ENCODE measurements at regions of chrX and their contacts with region 1.

Region 1: DNA sequence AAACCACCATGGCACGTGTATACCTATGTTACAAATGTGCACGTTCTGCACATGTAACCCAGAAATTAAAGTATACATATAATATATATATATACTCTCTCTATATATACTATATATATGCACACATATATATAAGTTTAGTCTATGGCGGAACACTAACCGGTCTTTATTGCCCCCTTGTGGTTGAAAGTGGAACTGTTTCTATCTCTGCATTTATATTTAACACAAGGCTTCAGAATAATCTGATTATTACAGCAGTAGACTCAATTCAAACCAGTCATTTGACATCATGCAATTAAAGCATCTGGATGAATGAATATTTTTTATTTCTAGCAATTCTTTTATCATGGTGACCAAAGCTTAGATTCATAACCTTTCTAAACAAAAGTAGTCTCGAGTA is 14.6 kb downstream of the RAB9B start:
- DNase-seq: peak; percentile 71
- H3K4me3 ChIP-seq: no peak overlapping the region
- H3K27ac ChIP-seq: no peak overlapping the region
- H3K4me1 ChIP-seq: peaks cover 8% of the 10 kb centered on the region
- CTCF ChIP-seq: peak; percentile 76

Region 2: DNA sequence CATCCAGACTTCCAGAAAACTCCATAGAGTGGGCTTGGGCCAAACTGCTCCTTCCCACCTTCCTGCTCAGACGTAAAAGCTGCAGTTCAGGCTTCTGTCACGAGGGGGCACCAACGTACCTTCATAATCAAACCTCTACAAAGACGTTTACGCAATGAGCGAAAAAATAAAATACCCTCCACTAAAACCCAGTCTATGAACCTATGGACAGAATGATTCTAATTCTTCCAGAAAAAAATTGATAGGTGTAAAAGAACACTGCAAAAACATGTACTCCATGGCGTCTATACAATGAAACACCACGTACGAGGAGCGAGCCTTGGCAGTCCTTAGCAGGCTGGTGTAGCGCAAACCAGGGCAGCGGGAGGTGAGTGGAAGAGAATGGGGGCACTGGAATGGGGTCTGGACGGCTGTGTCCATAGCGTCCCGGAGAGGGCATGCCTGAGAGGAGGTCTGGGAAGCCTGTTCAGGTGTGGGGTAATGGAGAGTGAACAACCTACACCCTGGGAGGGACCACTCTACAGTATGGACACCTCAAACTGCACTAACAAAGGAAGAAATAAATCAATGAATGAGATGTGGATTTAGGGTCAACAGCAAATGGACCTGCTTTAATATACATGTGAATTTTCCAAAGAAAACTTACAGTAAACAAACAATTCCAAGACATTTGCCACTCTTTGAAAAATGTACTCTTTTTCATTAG is 283.8 kb before region 1 on chrX:
- CTCF ChIA-PET with region 1: interaction called, 6 read pairs
- POLR2A ChIA-PET with region 1: no interaction called
- intact Hi-C with region 1: loop called (anchors 2 kb)
- DNase-seq: peak; percentile 59
- H3K4me3 ChIP-seq: no peak overlapping the region
- H3K27ac ChIP-seq: no peak overlapping the region
- H3K4me1 ChIP-seq: no peaks in the 10 kb centered on the region
- CTCF ChIP-seq: peak; percentile 84

Region 3: DNA sequence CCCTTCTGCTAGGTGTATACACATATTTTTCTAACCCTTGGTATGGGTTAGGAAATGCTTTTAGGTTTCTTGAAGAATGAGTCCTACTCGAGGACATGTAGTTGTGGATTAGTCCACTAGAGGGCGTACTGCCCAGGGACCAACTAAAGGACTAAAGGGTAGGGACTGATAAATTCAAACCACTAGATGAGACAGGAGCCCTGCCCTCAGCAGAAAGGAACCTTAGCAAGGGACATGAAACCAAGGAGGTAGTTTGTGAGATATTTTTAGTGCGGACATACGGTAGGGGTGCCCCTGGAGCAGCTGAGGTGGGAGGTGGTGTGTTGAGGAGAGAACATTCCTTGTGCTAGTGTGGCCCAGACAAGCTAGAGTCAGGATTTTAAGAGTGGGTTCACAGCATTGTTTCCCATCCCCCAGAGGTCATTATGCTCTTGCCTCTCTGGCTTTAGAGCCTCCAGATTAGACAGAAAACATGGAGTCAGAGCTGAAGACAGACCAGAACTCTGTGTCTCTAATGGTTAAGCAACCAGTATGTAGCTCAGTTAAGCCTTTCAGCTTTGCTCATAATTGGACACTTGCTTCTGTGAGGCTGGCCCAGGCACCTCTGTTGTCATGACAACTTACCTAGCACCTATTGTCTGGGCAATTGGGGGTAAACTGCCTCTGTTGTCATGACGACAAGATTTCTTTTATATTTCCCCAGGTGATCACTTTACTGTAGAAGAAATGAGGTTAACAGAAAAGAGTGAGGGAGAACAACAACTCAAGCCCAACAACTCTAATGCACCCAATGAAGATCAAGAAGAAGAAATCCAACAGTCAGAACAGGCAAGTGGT is 105.8 kb before region 1 on chrX:
- CTCF ChIA-PET with region 1: no interaction called
- POLR2A ChIA-PET with region 1: interaction called, 3 read pairs
- intact Hi-C with region 1: loop called (anchors 1 kb)
- DNase-seq: peak; percentile 57
- H3K4me3 ChIP-seq: no peak overlapping the region
- H3K27ac ChIP-seq: no peak overlapping the region
- H3K4me1 ChIP-seq: no peaks in the 10 kb centered on the region
- CTCF ChIP-seq: peak; percentile 76